K562 (cell line): ENCODE measurements at regions of chr1 and their contacts with region 1.

Region 1: GRCh38 chr1:15128520-15129313 is 24.8 kb upstream of the TMEM51 start:
- DNase-seq: peak; percentile 81 to 86 (median 82)
- ATAC-seq: peak; percentile 100
- H3K4me3 ChIP-seq: no peak overlapping the region
- H3K27ac ChIP-seq: no peak overlapping the region
- H3K4me1 ChIP-seq: peaks cover 0 to 4% of the 10 kb centered on the region in 2 experiments; a peak in 1 of 5 replicates
- H3K27me3 ChIP-seq: peaks cover 4 to 35% of the 10 kb centered on the region in 2 experiments; a peak in 3 of 5 replicates
- CTCF ChIP-seq: peak; percentile 92 to 97 (median 95)
- EP300 ChIP-seq: no peak
- POLR2A ChIP-seq: no peak
- RAD21 ChIP-seq: peak; percentile 92 to 96

Region 2: GRCh38 chr1:15168479-15168878 is 39.8 kb after region 1 on chr1:
- CTCF ChIA-PET with region 1: no interaction called
- POLR2A ChIA-PET with region 1: no interaction called
- in situ Hi-C with region 1: no loop called
- intact Hi-C with region 1: no loop called
- DNase-seq: no peak
- ATAC-seq: no peak
- H3K4me3 ChIP-seq: no peak overlapping the region
- H3K27ac ChIP-seq: no peak overlapping the region
- H3K4me1 ChIP-seq: peaks cover 0 to 4% of the 10 kb centered on the region in 2 experiments; a peak in 2 of 5 replicates
- H3K27me3 ChIP-seq: peaks cover 13 to 32% of the 10 kb centered on the region in 2 experiments; a peak in 3 of 5 replicates
- CTCF ChIP-seq: no peak
- EP300 ChIP-seq: no peak
- POLR2A ChIP-seq: no peak
- RAD21 ChIP-seq: no peak

Region 3: GRCh38 chr1:15304701-15305467 is 176.2 kb after region 1 on chr1:
- CTCF ChIA-PET with region 1: interaction called, 27 read pairs
- POLR2A ChIA-PET with region 1: no interaction called
- in situ Hi-C with region 1: no loop called
- intact Hi-C with region 1: loop called (anchors 1 kb)
- DNase-seq: peak; percentile 72 to 82 (median 78)
- ATAC-seq: peak; percentile 92
- H3K4me3 ChIP-seq: no peak overlapping the region
- H3K27ac ChIP-seq: no peak overlapping the region
- H3K4me1 ChIP-seq: no peaks in the 10 kb centered on the region
- H3K27me3 ChIP-seq: peaks cover 19 to 26% of the 10 kb centered on the region in 2 experiments
- CTCF ChIP-seq: peak; percentile 78 to 99 (median 84)
- EP300 ChIP-seq: no peak
- POLR2A ChIP-seq: no peak
- RAD21 ChIP-seq: peak; percentile 50 to 89; a peak in 3 of 4 replicates